Panc1 (cell line): ENCODE measurements at regions of chr5 and their contacts with region 1.

Region 1: DNA sequence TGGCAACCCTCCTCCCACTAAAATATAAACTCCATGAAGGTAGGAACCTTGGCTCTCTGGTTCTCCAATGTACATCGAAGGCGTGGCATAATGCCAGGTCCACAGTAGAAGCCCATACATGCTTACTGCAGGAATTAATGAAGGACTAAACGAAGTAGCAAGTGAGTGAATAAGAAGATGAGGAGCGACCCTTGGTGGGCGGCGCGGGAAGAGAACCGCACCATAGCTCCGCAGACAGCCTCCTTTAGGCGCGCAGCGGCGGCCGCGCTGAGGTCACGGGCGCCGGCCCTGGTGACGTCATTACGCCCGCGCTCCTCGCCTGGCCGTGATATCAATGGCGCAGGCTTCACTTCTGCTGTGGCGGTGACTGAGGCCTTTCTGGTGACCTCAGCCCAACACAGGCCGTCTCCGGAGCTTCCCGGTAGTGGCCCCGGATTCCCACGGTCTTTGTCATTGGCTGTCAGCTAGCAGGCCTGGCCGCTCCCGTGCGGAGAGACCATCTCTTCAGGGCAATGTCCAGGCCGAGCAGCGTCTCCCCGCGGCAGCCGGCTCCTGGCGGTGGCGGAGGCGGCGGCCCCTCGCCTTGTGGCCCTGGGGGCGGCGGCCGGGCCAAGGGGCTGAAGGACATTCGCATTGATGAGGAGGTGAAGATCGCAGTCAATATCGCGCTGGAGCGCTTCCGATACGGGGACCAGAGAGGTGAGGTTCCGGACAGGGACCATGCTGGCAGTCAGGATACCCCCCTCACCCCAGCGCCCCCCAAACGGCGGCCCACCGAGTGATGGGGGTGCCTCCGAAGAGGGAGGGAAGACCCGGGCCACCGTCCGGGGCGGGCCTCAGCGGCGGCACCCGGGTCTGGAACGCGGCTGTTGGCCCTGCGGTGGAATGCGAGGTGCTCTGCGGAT is at the start of gene YTHDC2:
- DNase-seq: peak; percentile 43
- ATAC-seq: peak; percentile 99
- H3K4me3 ChIP-seq: peak within 1 kb of the TSS; percentile 82 to 89
- H3K27ac ChIP-seq: peak within 1 kb of the TSS; percentile 89
- H3K4me1 ChIP-seq: peaks cover 10% of the 10 kb centered on the region
- H3K27me3 ChIP-seq: peaks cover 8% of the 10 kb centered on the region; the same call in 1 of the 2 replicates
- CTCF ChIP-seq: peak; percentile 46
- total RNA-seq, gene YTHDC2: 21.7 TPM

Region 2: GRCh38 chr5:112995764-112996618 is 517.6 kb before region 1 on chr5:
- CTCF ChIA-PET with region 1: interaction called, 4 read pairs
- POLR2A ChIA-PET with region 1: no interaction called
- in situ Hi-C with region 1: no loop called
- intact Hi-C with region 1: loop called (anchors 10 kb)
- DNase-seq: no peak
- ATAC-seq: peak; percentile 93
- H3K4me3 ChIP-seq: no peak overlapping the region
- H3K27ac ChIP-seq: no peak overlapping the region
- H3K4me1 ChIP-seq: no peaks in the 10 kb centered on the region; the same call in 1 of the 2 replicates
- H3K27me3 ChIP-seq: no peaks in the 10 kb centered on the region
- CTCF ChIP-seq: peak; percentile 90

Region 3: GRCh38 chr5:113336975-113337374 is 176.7 kb before region 1 on chr5:
- CTCF ChIA-PET with region 1: interaction called, 3 read pairs
- POLR2A ChIA-PET with region 1: no interaction called
- in situ Hi-C with region 1: no loop called
- intact Hi-C with region 1: loop called (anchors 5 kb)
- DNase-seq: no peak
- ATAC-seq: peak; percentile 84
- H3K4me3 ChIP-seq: no peak overlapping the region
- H3K27ac ChIP-seq: no peak overlapping the region
- H3K4me1 ChIP-seq: no peaks in the 10 kb centered on the region
- H3K27me3 ChIP-seq: no peaks in the 10 kb centered on the region; the same call in 1 of the 2 replicates
- CTCF ChIP-seq: peak; percentile 58

Region 4: GRCh38 chr5:113378959-113379541 is 134.6 kb before region 1 on chr5:
- CTCF ChIA-PET with region 1: interaction called, 7 read pairs
- POLR2A ChIA-PET with region 1: no interaction called
- in situ Hi-C with region 1: no loop called
- intact Hi-C with region 1: loop called (anchors 1 kb)
- DNase-seq: peak; percentile 39
- ATAC-seq: peak; percentile 77
- H3K4me3 ChIP-seq: no peak overlapping the region
- H3K27ac ChIP-seq: no peak overlapping the region
- H3K4me1 ChIP-seq: no peaks in the 10 kb centered on the region
- H3K27me3 ChIP-seq: no peaks in the 10 kb centered on the region
- CTCF ChIP-seq: peak; percentile 86

Region 5: DNA sequence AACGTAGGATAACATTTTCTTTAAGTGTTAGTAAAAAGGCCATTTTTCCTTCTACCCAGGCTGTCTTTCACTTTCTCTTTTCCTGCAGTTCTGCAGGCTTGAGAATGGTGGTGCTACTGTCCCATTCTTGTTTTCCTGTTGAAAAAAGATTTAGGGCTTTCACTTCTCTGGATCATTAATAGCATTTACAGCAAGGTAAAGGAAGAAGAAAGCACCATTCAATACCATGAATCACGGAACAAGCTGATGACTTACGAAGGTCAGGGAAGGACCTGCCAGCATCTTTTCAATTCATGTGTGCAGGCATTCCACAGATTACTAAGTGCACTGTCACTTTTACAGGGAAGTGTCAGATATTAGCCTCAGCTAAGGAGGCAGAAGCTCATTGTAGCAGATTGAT is 292.6 kb after region 1 on chr5:
- CTCF ChIA-PET with region 1: no interaction called
- POLR2A ChIA-PET with region 1: no interaction called
- in situ Hi-C with region 1: no loop called
- intact Hi-C with region 1: no loop called
- DNase-seq: no peak
- ATAC-seq: no peak
- H3K4me3 ChIP-seq: no peak overlapping the region
- H3K27ac ChIP-seq: no peak overlapping the region
- H3K4me1 ChIP-seq: no peaks in the 10 kb centered on the region
- H3K27me3 ChIP-seq: no peaks in the 10 kb centered on the region
- CTCF ChIP-seq: peak; percentile 32; the same call in 1 of the 2 replicates

Region 6: GRCh38 chr5:113866763-113867162 is 353.1 kb after region 1 on chr5:
- CTCF ChIA-PET with region 1: no interaction called
- POLR2A ChIA-PET with region 1: no interaction called
- in situ Hi-C with region 1: no loop called
- intact Hi-C with region 1: no loop called
- DNase-seq: no peak
- ATAC-seq: no peak
- H3K4me3 ChIP-seq: no peak overlapping the region
- H3K27ac ChIP-seq: no peak overlapping the region
- H3K4me1 ChIP-seq: no peaks in the 10 kb centered on the region
- H3K27me3 ChIP-seq: no peaks in the 10 kb centered on the region
- CTCF ChIP-seq: no peak